Activated CD4-positive, alpha-beta T cell treated with anti-CD3 and anti-CD28 coated beads for 36 hours (primary cell): ENCODE measurements at regions of chr20 and their contacts with region 1.

Region 1: DNA sequence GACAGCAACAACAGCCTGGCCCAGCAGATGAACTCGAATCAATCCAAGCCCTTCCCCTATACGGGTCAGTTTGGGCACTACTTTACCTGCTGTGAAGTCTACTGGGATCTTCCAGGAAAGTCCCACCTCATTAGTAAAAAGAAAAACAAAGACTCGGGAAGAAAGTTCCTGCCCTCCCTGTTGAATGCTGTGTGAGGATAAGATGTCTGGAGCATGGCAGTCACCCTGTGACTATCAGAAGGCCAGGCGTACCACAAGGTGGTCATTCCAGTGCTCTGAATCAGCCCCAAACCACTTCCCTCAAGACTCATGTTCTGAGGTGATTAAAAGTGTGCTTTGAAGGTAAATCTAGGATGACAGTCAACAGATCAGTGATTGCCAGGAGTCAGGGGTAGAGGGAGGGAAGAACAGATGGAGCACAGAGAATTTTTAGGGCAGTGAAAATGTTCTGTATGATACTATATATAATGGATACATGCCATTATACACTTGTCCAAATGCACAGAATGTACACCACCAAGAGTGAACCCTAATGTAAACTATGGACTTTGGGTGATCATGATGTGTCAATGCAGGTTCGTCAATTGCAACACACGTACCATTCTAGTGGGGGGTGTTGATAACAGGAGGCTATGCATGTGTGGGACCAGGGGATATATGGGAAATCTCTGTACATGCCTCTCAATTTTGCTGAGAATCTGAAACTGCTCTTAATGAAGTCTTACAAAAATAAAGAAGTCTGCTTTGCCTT is 14.7 kb downstream of the FKBP1A start:
- DNase-seq: peak; percentile 50
- ATAC-seq: peak; percentile 33
- H3K4me3 Mint-ChIP-seq: no peak overlapping the region
- H3K27ac Mint-ChIP-seq: peak overlapping the region; percentile 88
- H3K4me1 Mint-ChIP-seq: peaks cover 84% of the 10 kb centered on the region
- H3K27me3 Mint-ChIP-seq: no peaks in the 10 kb centered on the region

Region 2: GRCh38 chr20:1357921-1358671 is 20.1 kb before region 1 on chr20:
- CTCF ChIA-PET with region 1: interaction called, 5 read pairs
- POLR2A ChIA-PET with region 1: interaction called, 4 read pairs
- intact Hi-C with region 1: loop called (anchors 1 kb)
- DNase-seq: peak; percentile 49
- ATAC-seq: peak; percentile 93
- H3K4me3 Mint-ChIP-seq: peak overlapping the region; percentile 54
- H3K27ac Mint-ChIP-seq: peak overlapping the region; percentile 70
- H3K4me1 Mint-ChIP-seq: peaks cover 56% of the 10 kb centered on the region
- H3K27me3 Mint-ChIP-seq: no peaks in the 10 kb centered on the region